CD8-positive, alpha-beta T cell (primary cell): ENCODE measurements at regions of chr17 and their contacts with region 1.

Region 1: DNA sequence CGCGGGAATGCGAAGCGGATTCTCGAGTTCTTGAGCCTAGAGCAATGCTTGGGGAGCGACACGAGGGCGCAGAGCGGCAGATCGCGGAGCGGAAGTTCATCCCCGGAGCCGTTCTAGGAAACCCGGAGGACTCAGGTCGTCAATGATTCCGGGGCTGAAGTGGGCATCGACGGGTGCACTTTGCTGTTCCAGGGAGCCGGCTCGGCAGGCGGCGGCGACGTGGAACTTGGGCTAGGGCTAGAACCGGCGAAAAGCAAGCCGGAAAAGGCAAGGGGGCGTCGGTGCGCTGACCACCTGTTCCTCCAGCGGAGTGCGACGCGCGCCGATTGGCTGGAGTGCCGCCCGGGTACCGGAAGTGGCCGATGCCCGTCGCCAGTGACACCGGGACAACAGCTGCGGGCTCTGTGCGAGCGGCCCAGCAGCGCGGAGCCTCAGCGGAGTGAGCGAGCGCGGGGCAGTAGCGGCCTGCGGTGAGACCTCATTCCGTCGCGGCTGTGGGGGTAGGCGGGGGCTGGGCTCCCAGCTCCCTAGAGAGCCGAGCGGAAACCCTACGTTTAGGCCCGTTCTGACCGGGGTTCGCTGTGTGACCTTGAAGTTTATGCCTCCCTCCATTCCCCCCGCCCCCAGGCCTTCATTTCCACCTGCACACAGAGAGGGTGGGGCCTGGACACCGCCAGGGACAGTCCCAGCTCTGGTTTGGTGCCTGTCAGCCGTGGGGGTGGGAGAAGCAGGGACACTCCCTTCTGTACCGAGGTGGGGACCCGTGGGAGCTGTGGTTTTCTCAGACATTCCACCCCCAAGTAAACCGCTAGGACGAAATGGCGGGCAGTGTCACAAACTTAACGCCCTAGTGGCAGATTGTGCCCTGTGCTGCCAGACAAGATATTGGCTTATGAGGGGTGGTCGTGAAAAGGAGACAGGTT is at the start of gene ZFP3:
- DNase-seq: peak; percentile 43 to 88 (median 73)
- ATAC-seq: peak; percentile 75
- H3K4me3 ChIP-seq: peak within 1 kb of the TSS; percentile 76 to 80
- H3K4me3 Mint-ChIP-seq: peak within 1 kb of the TSS; percentile 96
- H3K27ac ChIP-seq: peak within 1 kb of the TSS; percentile 65 to 76
- H3K27ac Mint-ChIP-seq: peak within 1 kb of the TSS; percentile 95
- H3K4me1 ChIP-seq: peaks cover 14% of the 10 kb centered on the region
- H3K4me1 Mint-ChIP-seq: peaks cover 29% of the 10 kb centered on the region
- H3K27me3 ChIP-seq: no peaks in the 10 kb centered on the region
- H3K27me3 Mint-ChIP-seq: no peaks in the 10 kb centered on the region
- CTCF ChIP-seq: peak; percentile 29
- total RNA-seq, gene ZFP3: 2.6 to 2.7 TPM

Region 2: DNA sequence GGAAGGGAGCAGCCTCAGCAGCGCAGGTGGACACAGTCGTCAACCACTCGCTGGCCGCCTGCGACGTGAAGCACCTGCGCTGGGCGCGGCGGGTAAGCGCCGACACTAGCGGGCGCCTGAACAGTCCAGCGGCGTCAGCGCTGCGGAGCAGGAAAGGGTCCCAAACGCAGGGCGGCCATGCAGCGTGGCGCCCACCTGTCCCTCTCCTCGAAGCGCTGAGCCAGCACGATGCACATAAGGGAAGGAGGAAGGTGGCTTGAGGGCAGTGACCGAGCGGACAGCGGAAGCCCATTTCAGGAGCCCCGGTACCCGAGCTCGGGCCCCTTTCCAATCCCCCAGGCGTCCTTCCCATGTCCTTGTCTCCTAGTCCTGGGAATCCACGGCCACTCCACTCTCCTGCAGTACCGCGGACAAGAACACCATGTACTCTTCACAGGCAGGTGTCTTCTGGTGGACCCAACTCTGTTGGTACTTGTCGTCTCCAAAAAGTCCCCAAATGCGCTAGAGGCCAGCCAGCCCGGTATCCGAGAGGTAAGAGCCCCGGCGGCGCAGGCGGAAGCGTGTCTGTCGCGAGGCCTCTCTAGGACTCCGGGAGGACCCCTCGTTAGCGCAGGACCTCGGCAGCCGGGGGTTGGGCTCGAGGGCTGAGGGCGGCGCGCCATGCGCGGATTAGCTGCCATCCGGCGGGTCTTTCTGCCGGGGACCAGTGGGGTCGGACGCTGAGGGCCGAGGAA is 18.9 kb after region 1 on chr17:
- CTCF ChIA-PET with region 1: interaction called, 4 read pairs
- POLR2A ChIA-PET with region 1: interaction called, 3 read pairs
- intact Hi-C with region 1: loop called in 1 of 2 experiments (anchors 1 kb)
- DNase-seq: peak in 8 of 9 experiments; percentile 36 to 74 (median 61)
- ATAC-seq: peak; percentile 93
- H3K4me3 ChIP-seq: peak overlapping the region; percentile 51 to 56
- H3K4me3 Mint-ChIP-seq: peak overlapping the region; percentile 89
- H3K27ac ChIP-seq: no peak overlapping the region
- H3K27ac Mint-ChIP-seq: peak overlapping the region; percentile 84
- H3K4me1 ChIP-seq: peaks cover 4% of the 10 kb centered on the region
- H3K4me1 Mint-ChIP-seq: peaks cover 10% of the 10 kb centered on the region
- H3K27me3 ChIP-seq: peaks cover 0 to 8% of the 10 kb centered on the region in 2 experiments
- H3K27me3 Mint-ChIP-seq: peaks cover 6% of the 10 kb centered on the region
- CTCF ChIP-seq: no peak